ENCODE measurements at regions of chr13 and their contacts with region 1.

Region 1: GRCh38 chr13:48769107-48769704 is 115.5 kb downstream of the CYSLTR2 start:
- DNase-seq: peak; percentile 93
- H3K4me3 ChIP-seq: no peak overlapping the region
- H3K27ac ChIP-seq: no peak overlapping the region
- H3K4me1 ChIP-seq: no peaks in the 10 kb centered on the region
- H3K27me3 ChIP-seq: peaks cover 15 to 30% of the 10 kb centered on the region in 2 experiments
- CTCF ChIP-seq: peak; percentile 92 to 98
- POLR2A ChIP-seq: no peak

Region 2: DNA sequence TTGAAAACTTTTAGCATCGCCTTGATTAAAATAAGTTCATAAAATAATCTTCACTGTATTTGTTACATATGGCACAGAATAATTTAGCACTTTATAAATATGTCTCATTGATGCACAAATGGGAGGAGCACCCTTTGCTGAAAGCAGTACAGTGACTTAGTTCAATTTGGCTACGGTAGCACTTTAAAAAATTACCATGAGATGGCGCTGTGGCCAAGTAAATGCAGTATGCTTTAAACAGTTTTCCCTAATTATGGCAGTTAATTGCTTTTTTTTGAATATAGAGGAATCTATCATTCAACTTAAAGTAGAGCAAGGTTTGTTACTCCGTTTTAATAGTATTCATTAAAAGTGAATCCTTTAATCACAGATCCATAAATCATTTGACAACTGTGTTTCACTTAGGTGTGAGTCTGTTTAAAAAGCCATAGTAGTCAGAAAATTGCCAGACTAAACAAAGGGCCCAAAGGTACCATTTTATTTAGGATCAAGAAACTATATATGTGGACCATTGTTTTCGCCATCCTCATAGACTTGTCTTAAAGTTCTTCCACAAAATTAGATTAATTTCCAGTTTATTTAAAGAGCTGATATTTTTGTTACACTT is 1937.5 kb before region 1 on chr13:
- CTCF ChIA-PET with region 1: interaction called, 32 read pairs
- POLR2A ChIA-PET with region 1: no interaction called
- dilution Hi-C with region 1: no loop called
- intact Hi-C with region 1: no loop called
- DNase-seq: peak; percentile 60
- H3K4me3 ChIP-seq: no peak overlapping the region
- H3K27ac ChIP-seq: no peak overlapping the region
- H3K4me1 ChIP-seq: no peaks in the 10 kb centered on the region
- H3K27me3 ChIP-seq: peaks cover 0 to 6% of the 10 kb centered on the region in 2 experiments
- CTCF ChIP-seq: peak; percentile 39 to 51
- POLR2A ChIP-seq: no peak

Region 3: GRCh38 chr13:48037346-48038173 is 731.6 kb before region 1 on chr13 and contains the start of gene NUDT15:
- CTCF ChIA-PET with region 1: interaction called, 16 read pairs
- POLR2A ChIA-PET with region 1: no interaction called
- dilution Hi-C with region 1: no loop called
- intact Hi-C with region 1: loop called (anchors 1 kb)
- DNase-seq: peak; percentile 96
- H3K4me3 ChIP-seq: peak within 1 kb of the TSS; percentile 54 to 75 (median 72)
- H3K27ac ChIP-seq: peak within 1 kb of the TSS; percentile 82
- H3K4me1 ChIP-seq: peaks cover 16% of the 10 kb centered on the region
- H3K27me3 ChIP-seq: no peaks in the 10 kb centered on the region
- CTCF ChIP-seq: peak; percentile 100
- POLR2A ChIP-seq: peak; percentile 95
- total RNA-seq, gene NUDT15: 20.6 and 21.6 TPM in 2 replicates

Region 4: GRCh38 chr13:48334534-48335127 is 434.6 kb before region 1 on chr13:
- CTCF ChIA-PET with region 1: interaction called, 41 read pairs
- POLR2A ChIA-PET with region 1: no interaction called
- dilution Hi-C with region 1: no loop called
- intact Hi-C with region 1: loop called (anchors 1 kb)
- DNase-seq: peak; percentile 71
- H3K4me3 ChIP-seq: no peak overlapping the region
- H3K27ac ChIP-seq: no peak overlapping the region
- H3K4me1 ChIP-seq: no peaks in the 10 kb centered on the region
- H3K27me3 ChIP-seq: no peaks in the 10 kb centered on the region
- CTCF ChIP-seq: peak; percentile 11 to 27
- POLR2A ChIP-seq: no peak

Region 5: GRCh38 chr13:48731957-48732569 is 37.1 kb before region 1 on chr13:
- CTCF ChIA-PET with region 1: interaction called, 10 read pairs
- POLR2A ChIA-PET with region 1: no interaction called
- dilution Hi-C with region 1: no loop called
- intact Hi-C with region 1: no loop called
- DNase-seq: peak; percentile 59
- H3K4me3 ChIP-seq: no peak overlapping the region
- H3K27ac ChIP-seq: no peak overlapping the region
- H3K4me1 ChIP-seq: no peaks in the 10 kb centered on the region
- H3K27me3 ChIP-seq: peaks cover 9% of the 10 kb centered on the region in 2 experiments
- CTCF ChIP-seq: peak; percentile 76 to 91
- POLR2A ChIP-seq: no peak

Region 6: GRCh38 chr13:48782429-48782840 is 13.2 kb after region 1 on chr13:
- CTCF ChIA-PET with region 1: interaction called, 13 read pairs
- POLR2A ChIA-PET with region 1: no interaction called
- dilution Hi-C with region 1: no loop called
- intact Hi-C with region 1: no loop called
- DNase-seq: no peak
- H3K4me3 ChIP-seq: no peak overlapping the region
- H3K27ac ChIP-seq: no peak overlapping the region
- H3K4me1 ChIP-seq: no peaks in the 10 kb centered on the region
- H3K27me3 ChIP-seq: peaks cover 2 to 6% of the 10 kb centered on the region in 2 experiments
- CTCF ChIP-seq: no peak
- POLR2A ChIP-seq: no peak

Region 7: GRCh38 chr13:49464621-49465325 is 695.6 kb after region 1 on chr13:
- CTCF ChIA-PET with region 1: no interaction called
- POLR2A ChIA-PET with region 1: no interaction called
- dilution Hi-C with region 1: no loop called
- intact Hi-C with region 1: no loop called
- DNase-seq: no peak
- H3K4me3 ChIP-seq: no peak overlapping the region
- H3K27ac ChIP-seq: no peak overlapping the region
- H3K4me1 ChIP-seq: no peaks in the 10 kb centered on the region
- H3K27me3 ChIP-seq: no peaks in the 10 kb centered on the region
- CTCF ChIP-seq: no peak
- POLR2A ChIP-seq: no peak